Heart right ventricle (tissue), 16 donors: ENCODE measurements at regions of chr17 and their contacts with region 1.

Region 1: DNA sequence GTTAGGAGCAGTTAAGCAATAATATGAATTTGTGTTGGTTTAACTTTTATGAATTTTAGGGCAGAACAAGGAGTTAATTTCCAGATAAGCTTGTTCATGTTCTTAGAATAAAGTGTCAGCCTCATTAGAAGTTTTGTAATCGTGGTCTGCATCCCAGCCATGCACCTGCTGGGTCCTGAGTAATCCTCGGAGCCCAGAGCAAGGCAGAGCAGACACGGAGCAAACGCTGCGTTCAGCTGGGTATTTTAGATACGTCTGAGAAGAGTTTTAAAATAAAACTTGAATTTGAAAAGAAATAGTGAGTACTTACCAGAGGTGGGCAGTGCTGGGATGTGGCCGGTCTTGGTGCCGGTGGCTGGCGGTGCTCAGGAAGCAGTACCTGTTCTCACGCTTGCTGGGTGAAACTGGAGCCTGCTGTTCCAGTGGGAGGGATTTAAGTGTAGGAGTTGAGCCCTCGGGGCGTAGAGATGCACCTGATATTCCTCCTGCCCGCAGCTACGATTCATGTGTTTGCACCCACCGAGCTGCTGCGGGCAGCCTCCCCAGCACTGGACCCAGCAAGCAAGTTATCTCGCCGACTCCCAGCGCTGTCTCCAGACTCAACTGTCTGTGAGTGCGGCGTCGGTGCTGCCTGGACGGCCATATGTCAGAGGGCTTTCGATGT is at the start of gene ZNF750:
- DNase-seq: no peak
- ATAC-seq: no peak
- H3K4me3 ChIP-seq: no peak within 1 kb of the TSS
- H3K27ac ChIP-seq: peak within 1 kb of the TSS in 7 of 10 donors; percentile 11 to 73 (median 41)
- H3K4me1 ChIP-seq: peaks cover 7 to 42% (median 31%) of the 10 kb centered on the region in 9 donors
- H3K27me3 ChIP-seq: no peaks in the 10 kb centered on the region
- CTCF ChIP-seq: no peak
- total RNA-seq, gene ZNF750: 0.11 to 0.20 (median 0.15) TPM in 3 of 10 donors, not detected in the others

Region 2: DNA sequence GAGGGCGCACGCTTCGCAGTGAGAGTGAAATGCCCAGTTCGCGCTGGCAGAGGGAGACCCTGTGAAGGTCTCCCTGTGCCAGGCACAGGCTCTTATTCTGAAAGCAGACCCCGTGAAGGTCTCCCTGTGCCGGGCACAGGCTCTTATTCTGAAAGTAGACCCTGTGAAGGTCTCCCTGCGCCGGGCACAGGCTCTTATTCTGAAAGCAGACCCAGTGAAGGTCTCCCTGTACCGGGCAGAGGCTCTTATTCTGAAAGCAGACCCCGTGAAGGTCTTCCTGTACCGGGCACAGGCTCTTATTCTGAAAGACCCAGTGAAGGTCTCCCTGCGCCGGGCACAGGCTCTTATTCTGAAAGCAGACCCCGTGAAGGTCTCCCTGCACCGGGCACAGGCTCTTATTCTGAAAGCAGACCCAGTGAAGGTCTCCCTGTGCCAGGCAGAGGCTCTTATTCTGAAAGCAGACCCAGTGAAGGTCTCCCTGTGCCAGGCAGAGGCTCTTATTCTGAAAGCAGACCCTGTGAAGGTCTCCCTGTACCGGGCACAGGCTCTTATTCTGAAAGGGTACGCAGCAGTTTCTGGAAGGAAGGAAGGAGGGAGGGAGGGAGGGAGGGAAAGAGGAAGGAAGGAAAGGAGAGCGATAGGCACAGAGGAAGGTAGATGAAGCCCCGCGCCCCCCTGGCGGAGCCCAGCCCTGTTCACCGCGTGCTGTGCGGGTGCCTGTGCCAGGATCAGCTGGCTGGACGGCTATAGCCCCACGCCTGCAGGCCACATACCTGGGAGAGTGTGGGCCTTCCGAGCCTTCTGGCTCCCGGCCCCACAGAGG is 246.8 kb before region 1 on chr17:
- intact Hi-C with region 1: no loop called
- DNase-seq: peak; percentile 52 to 78
- ATAC-seq: peak; percentile 49 to 61 (median 56)
- H3K4me3 ChIP-seq: peak overlapping the region; percentile 39 to 66 (median 60)
- H3K27ac ChIP-seq: peak overlapping the region; percentile 59 to 95 (median 89)
- H3K4me1 ChIP-seq: peaks cover 13 to 55% (median 36%) of the 10 kb centered on the region in 9 donors
- H3K27me3 ChIP-seq: no peaks in the 10 kb centered on the region
- CTCF ChIP-seq: no peak

Region 3: DNA sequence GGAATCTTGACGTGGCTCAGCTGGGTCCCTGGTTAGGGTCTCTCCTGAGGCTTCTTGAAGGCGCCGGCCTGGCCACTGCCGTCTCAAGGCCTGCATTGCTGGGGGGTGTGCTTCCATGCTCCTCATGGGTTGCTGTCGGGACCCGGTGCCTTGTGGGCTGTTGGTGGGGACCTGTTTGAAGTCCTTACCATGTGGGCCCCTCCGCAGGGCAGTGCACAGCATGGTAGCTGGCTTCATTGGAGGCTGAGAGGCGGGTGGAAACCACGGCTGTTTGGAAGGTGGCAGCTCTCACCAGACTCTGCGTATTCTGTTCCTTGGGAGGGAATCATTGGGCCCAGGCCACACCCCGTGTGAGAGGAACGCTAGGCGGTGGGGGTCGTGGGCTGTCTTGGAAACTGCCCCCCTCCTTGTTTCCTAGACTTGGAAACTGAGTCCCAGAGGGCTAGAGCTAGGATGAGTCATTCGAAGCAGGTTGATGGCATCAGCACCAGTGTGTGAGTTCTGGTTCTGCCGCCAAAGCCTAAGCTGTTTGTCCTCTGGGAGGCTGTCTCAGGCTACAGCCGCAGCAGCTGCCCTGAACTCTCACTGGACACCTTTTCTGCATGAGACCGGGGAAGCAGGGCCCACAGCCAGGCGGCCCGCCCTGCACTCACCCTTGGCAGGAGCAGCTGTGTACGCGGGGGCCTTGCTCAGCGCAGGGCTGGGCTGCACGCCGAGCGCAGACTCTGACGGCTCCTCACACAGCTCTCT is 35.1 kb before region 1 on chr17:
- intact Hi-C with region 1: loop called in 3 of 10 experiments (anchors 2 to 5 kb)
- DNase-seq: peak; percentile 76 to 84
- ATAC-seq: peak; percentile 88 to 92 (median 90)
- H3K4me3 ChIP-seq: no peak overlapping the region
- H3K27ac ChIP-seq: peak overlapping the region; percentile 24 to 78 (median 71)
- H3K4me1 ChIP-seq: peaks cover 13 to 57% (median 34%) of the 10 kb centered on the region in 9 donors
- H3K27me3 ChIP-seq: no peaks in the 10 kb centered on the region
- CTCF ChIP-seq: peak in 2 of 9 donors; percentile 14 to 19